ENCODE measurements at regions of chr6 and their contacts with region 1.

Region 1: GRCh38 chr6:75532515-75532914 is 38.9 kb upstream of the FILIP1 start:
- DNase-seq: no peak
- ATAC-seq: no peak
- H3K4me3 ChIP-seq: no peak overlapping the region
- H3K27ac ChIP-seq: no peak overlapping the region
- H3K4me1 ChIP-seq: no peaks in the 10 kb centered on the region
- H3K27me3 ChIP-seq: no peaks in the 10 kb centered on the region
- CTCF ChIP-seq: no peak

Region 2: DNA sequence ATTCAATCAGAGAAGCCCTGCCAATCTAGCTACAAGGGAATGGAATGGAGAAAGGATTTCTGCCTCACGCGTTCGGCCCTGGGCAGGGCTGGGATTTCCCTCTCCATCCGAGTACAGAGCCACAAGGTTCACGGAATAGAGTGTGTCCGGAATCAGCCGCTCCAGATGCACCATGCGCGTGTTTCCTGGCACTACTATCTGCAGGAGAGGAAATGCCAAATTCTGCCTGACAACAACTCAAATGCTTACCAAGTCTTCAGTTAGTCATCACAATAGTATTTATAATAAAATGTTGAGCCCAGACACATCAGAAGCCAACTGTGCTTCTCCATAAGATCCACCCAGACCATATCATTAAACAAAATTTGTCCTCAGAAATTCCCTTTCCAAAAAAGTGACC is 401.7 kb before region 1 on chr6:
- intact Hi-C with region 1: no loop called
- DNase-seq: no peak
- ATAC-seq: no peak
- H3K4me3 ChIP-seq: no peak overlapping the region
- H3K27ac ChIP-seq: no peak overlapping the region
- H3K4me1 ChIP-seq: no peaks in the 10 kb centered on the region
- H3K27me3 ChIP-seq: no peaks in the 10 kb centered on the region
- CTCF ChIP-seq: no peak

Region 3: GRCh38 chr6:75266716-75267291 is 265.7 kb before region 1 on chr6:
- intact Hi-C with region 1: loop called in 1 of 3 experiments (anchors 10 kb)
- DNase-seq: no peak
- ATAC-seq: peak; percentile 79 to 90 (median 88)
- H3K4me3 ChIP-seq: no peak overlapping the region
- H3K27ac ChIP-seq: no peak overlapping the region
- H3K4me1 ChIP-seq: peaks cover 5 to 28% (median 28%) of the 10 kb centered on the region in 3 donors
- H3K27me3 ChIP-seq: no peaks in the 10 kb centered on the region
- CTCF ChIP-seq: peak; percentile 52 to 79 (median 69)

Measured in pancreas (tissue), 10 donors.